K562 (cell line): ENCODE measurements at regions of chr1 and their contacts with region 1.

Region 1: DNA sequence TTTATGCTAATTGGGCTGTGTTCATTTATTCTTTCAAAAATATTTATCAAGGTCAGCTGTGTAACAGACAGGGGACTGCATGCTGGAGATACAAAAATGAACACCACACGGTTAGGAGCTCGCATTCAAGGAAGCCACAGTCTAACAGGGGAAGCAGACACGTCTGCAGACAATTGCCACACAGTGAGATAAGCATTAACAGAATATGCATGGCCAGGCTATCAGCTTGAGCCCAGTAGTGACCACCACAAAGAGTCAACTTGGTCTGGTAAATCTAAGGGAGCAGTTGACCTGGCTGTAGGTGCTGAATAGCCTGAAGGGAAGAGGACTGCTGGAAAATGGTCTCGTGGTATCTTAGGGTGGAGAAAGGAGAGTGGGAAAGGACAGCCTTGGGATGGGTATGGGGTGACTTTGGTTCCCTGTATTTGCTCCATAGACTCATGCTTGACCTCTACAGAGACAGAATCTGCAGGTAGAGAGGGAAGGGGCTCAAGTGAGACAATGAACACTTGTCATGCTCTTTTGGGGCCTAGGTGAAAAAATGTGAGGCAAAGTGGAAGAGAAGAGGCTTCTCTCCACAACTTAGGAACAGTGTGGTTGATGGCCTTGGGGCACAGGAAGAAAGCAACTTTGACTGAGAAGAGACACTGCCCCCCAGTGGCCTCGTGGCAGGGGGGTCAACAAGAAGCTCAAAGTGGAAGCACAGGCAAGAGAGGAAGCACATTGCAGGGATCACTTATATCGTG is 7.6 kb upstream of the NPL start:
- DNase-seq: peak; percentile 59 to 84 (median 70)
- ATAC-seq: peak; percentile 86
- H3K4me3 ChIP-seq: no peak overlapping the region
- H3K27ac ChIP-seq: no peak overlapping the region
- H3K4me1 ChIP-seq: peaks cover 0 to 20% of the 10 kb centered on the region in 2 experiments; a peak in 2 of 5 replicates
- H3K27me3 ChIP-seq: peaks cover 0 to 2% of the 10 kb centered on the region in 2 experiments; a peak in 3 of 5 replicates
- CTCF ChIP-seq: peak; percentile 87 to 93 (median 91)
- EP300 ChIP-seq: no peak
- POLR2A ChIP-seq: no peak
- RAD21 ChIP-seq: peak; percentile 93 to 97

Region 2: GRCh38 chr1:182446033-182446669 is 335.9 kb before region 1 on chr1:
- CTCF ChIA-PET with region 1: interaction called, 14 read pairs
- POLR2A ChIA-PET with region 1: interaction called, 3 read pairs
- in situ Hi-C with region 1: loop called (anchors 5 kb)
- intact Hi-C with region 1: loop called (anchors 1 kb)
- DNase-seq: peak; percentile 63 to 77 (median 69)
- ATAC-seq: peak; percentile 89
- H3K4me3 ChIP-seq: no peak overlapping the region
- H3K27ac ChIP-seq: no peak overlapping the region
- H3K4me1 ChIP-seq: no peaks in the 10 kb centered on the region; a peak in 1 of 5 replicates
- H3K27me3 ChIP-seq: peaks cover 0 to 6% of the 10 kb centered on the region in 2 experiments; a peak in 3 of 5 replicates
- CTCF ChIP-seq: peak; percentile 74 to 89 (median 81)
- EP300 ChIP-seq: no peak
- POLR2A ChIP-seq: no peak
- RAD21 ChIP-seq: peak; percentile 90 to 98

Region 3: GRCh38 chr1:182595641-182596240 is 186.3 kb before region 1 on chr1:
- CTCF ChIA-PET with region 1: interaction called, 53 read pairs
- POLR2A ChIA-PET with region 1: interaction called, 4 read pairs
- in situ Hi-C with region 1: loop called (anchors 5 kb)
- intact Hi-C with region 1: no loop called
- DNase-seq: peak; percentile 72 to 76 (median 73)
- ATAC-seq: peak; percentile 51; the same call in 2 of the 3 replicates
- H3K4me3 ChIP-seq: no peak overlapping the region
- H3K27ac ChIP-seq: no peak overlapping the region
- H3K4me1 ChIP-seq: 0 out of 5 replicates have a peak, but pooled peaks cover 0 to 3% of the 10 kb centered on the region in 2 experiments
- H3K27me3 ChIP-seq: peaks cover 0 to 8% of the 10 kb centered on the region in 2 experiments; a peak in 1 of 5 replicates
- CTCF ChIP-seq: peak; percentile 82 to 93 (median 90)
- EP300 ChIP-seq: peak; percentile 17; the same call in 1 of the 2 replicates
- POLR2A ChIP-seq: no peak
- RAD21 ChIP-seq: peak; percentile 81

Region 4: GRCh38 chr1:182601416-182601786 is 180.6 kb before region 1 on chr1:
- CTCF ChIA-PET with region 1: interaction called, 53 read pairs
- POLR2A ChIA-PET with region 1: interaction called, 6 read pairs
- in situ Hi-C with region 1: loop called (anchors 5 kb)
- intact Hi-C with region 1: loop called (anchors 1 kb)
- DNase-seq: peak; percentile 69 to 90 (median 75)
- ATAC-seq: peak; percentile 48
- H3K4me3 ChIP-seq: no peak overlapping the region
- H3K27ac ChIP-seq: no peak overlapping the region
- H3K4me1 ChIP-seq: peaks cover 9 to 13% of the 10 kb centered on the region in 2 experiments; a peak in 4 of 5 replicates
- H3K27me3 ChIP-seq: peaks cover 2 to 21% of the 10 kb centered on the region in 2 experiments; a peak in 3 of 5 replicates
- CTCF ChIP-seq: peak; percentile 89 to 96 (median 90)
- EP300 ChIP-seq: no peak
- POLR2A ChIP-seq: no peak
- RAD21 ChIP-seq: peak; percentile 98 to 99

Region 5: DNA sequence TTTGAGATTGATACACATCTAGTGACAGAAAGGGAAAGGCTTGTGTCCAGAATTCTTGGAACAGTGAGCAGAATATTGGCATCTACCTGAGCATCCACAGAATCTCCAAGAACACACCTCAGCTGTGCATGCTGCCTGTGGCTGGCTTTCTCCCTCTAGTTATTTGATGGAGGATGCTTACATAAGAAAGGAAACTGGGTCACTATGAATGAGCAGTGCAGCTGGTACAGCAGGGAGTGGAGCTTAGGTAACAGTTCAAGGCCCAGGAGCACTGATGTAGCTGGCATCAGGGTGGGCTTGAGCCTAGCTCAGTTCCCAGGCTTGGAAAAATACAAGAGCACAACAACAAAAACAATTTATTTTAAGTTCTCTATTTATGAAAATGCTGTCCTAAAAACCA is 124.0 kb before region 1 on chr1:
- CTCF ChIA-PET with region 1: no interaction called
- POLR2A ChIA-PET with region 1: no interaction called
- in situ Hi-C with region 1: no loop called
- intact Hi-C with region 1: no loop called
- DNase-seq: no peak
- ATAC-seq: no peak
- H3K4me3 ChIP-seq: no peak overlapping the region
- H3K27ac ChIP-seq: no peak overlapping the region
- H3K4me1 ChIP-seq: no peaks in the 10 kb centered on the region; a peak in 1 of 5 replicates
- H3K27me3 ChIP-seq: peaks cover 12 to 23% of the 10 kb centered on the region in 2 experiments; a peak in 4 of 5 replicates
- CTCF ChIP-seq: no peak
- EP300 ChIP-seq: no peak
- POLR2A ChIP-seq: no peak
- RAD21 ChIP-seq: no peak

Region 6: DNA sequence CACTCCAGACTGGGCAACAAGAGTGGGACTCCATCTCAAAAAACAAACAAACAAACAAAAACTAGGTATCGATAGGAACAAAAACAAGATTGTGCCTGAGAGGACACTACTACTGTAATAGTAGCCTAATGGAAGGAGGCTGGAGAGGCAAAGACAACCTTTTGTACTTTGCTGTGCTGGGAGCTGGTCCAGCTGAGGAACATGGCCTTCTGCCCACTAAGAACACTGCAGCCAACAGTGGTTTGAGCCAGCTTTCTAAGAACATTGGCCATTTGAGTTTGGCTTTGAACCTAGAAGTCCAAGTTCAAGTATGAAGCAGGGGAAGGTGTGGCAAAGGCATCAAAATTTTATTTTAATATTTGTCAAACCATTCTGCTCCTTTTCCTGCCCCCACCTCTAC is 74.9 kb before region 1 on chr1:
- CTCF ChIA-PET with region 1: interaction called, 3 read pairs
- POLR2A ChIA-PET with region 1: no interaction called
- in situ Hi-C with region 1: no loop called
- intact Hi-C with region 1: loop called (anchors 5 kb)
- DNase-seq: no peak
- ATAC-seq: no peak
- H3K4me3 ChIP-seq: no peak overlapping the region
- H3K27ac ChIP-seq: no peak overlapping the region
- H3K4me1 ChIP-seq: no peaks in the 10 kb centered on the region
- H3K27me3 ChIP-seq: peaks cover 5 to 29% of the 10 kb centered on the region in 2 experiments; a peak in 4 of 5 replicates
- CTCF ChIP-seq: no peak
- EP300 ChIP-seq: no peak
- POLR2A ChIP-seq: no peak
- RAD21 ChIP-seq: no peak